ENCODE measurements at regions of chr3 and their contacts with region 1.

Region 1: DNA sequence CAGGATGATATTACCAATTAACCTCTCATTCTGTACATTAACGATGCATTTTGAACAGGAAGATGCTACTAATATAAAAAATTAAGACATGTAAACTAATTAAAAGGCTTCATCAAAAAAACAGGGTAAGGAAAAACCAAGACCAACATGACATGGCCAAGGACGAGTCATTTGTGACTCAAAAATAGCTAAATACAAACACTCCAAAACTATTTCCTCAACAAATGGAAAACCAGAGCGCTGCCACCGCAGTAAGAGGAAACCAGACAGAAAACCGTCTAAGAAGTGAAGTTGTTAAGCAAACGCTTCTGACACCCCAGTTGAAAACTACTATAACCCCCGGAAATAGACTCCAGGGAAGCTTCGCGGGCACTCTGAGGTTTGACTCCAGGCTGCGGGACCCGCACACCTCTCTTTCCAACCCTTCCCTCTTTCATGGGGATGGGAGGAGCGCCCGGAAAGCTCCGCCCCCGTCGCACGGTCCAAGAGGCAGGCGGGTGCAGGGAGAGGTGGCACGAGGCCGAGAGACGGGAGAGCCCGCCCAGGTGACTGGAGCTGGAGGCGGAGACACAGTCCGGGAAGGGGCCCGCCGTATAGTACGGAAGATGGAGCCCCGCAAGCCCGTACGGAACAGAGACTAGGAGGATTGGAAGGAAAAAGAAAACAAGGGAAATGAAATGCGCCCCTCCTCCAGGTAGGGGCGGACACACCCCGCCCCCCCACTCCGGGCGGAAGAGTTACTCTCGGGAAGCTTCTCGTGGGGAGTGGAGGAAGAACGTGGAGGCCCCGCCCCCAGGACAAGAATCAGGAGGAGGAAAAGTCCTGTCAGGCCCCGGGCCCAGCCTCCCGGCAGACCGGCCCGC is 708 bp downstream of the DCAF1 start:
- DNase-seq: peak; percentile 81
- H3K4me3 ChIP-seq: peak overlapping the region; percentile 78
- H3K27ac ChIP-seq: peak overlapping the region; percentile 88
- H3K27me3 ChIP-seq: no peaks in the 10 kb centered on the region
- CTCF ChIP-seq: no peak

Region 2: GRCh38 chr3:51362476-51362875 is 136.6 kb before region 1 on chr3:
- CTCF ChIA-PET with region 1: no interaction called
- POLR2A ChIA-PET with region 1: no interaction called
- DNase-seq: no peak
- H3K4me3 ChIP-seq: no peak overlapping the region
- H3K27ac ChIP-seq: no peak overlapping the region
- H3K27me3 ChIP-seq: peaks cover 6% of the 10 kb centered on the region
- CTCF ChIP-seq: no peak

Region 3: DNA sequence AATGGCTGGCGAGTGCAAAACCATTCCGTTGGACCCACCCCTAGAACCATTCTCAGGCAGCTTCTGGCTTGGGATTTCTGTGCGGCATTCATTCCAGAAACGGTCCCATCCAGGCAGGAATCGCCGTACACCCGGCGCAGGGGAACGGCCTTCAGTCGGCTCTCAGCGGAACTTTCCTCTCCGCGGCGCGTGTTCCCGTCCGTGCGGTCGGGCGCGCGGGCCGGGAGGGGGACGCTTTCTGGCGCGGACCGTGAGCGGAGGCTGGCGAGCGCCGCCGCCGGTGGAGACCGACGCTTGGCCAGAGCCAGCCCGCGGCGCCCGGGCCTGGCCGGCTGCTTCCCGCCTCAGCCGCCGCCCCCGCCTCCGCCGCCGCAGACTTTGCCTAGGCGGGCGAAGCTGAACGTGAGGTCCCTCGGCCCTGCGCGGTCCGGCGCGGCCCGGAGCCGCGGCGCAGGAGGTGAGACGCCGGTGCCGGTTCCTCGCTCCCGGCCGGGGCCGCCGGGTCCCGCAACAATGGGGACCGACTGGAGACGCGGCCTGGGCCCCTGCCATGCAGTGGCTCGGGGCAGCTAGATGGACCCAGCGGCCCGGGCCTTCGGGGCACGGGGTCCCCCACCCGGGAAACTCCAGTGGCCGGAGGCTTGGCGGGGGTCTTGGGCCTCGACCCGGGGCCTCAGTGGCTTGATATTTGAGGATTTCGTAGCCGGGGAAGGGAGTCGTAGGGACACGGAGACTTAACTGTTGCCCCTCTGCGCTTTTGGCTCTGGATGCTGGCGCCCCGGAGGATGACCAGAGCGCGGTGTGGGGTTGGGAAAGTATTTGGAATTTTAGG is 39.6 kb after region 1 on chr3 and contains the start of gene RAD54L2:
- CTCF ChIA-PET with region 1: interaction called, 16 read pairs
- POLR2A ChIA-PET with region 1: interaction called, 19 read pairs
- DNase-seq: peak; percentile 59
- H3K4me3 ChIP-seq: peak within 1 kb of the TSS; percentile 79
- H3K27ac ChIP-seq: peak within 1 kb of the TSS; percentile 89
- H3K27me3 ChIP-seq: no peaks in the 10 kb centered on the region
- CTCF ChIP-seq: no peak; the same call in 1 of the 2 replicates
- polyA plus RNA-seq, gene RAD54L2: 8.1 and 9.6 TPM in 2 replicates

Region 4: DNA sequence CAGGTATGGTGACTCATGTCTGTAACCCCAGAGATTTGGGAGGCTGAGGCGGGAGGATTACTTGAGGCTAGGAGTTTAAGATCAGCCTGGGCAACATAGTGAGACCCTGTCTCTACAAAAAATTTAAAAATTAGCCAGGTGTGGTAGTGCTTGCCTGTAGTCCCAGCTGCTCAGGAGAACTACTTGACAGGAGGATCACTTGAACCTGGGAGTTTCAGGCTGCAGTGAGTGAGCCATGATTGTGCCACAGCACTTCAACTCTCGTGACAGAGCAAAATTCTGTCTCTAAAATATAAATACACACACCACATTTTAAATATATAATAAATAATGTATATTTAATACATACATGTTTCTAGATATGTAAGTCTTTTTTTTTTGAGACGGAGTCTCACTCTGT is 118.5 kb after region 1 on chr3:
- CTCF ChIA-PET with region 1: interaction called, 9 read pairs
- POLR2A ChIA-PET with region 1: interaction called, 15 read pairs
- DNase-seq: no peak
- H3K4me3 ChIP-seq: no peak overlapping the region
- H3K27ac ChIP-seq: no peak overlapping the region
- H3K27me3 ChIP-seq: no peaks in the 10 kb centered on the region
- CTCF ChIP-seq: no peak

Region 5: GRCh38 chr3:51682079-51682478 is 183.0 kb after region 1 on chr3:
- CTCF ChIA-PET with region 1: interaction called, 189 read pairs
- POLR2A ChIA-PET with region 1: interaction called, 9 read pairs
- DNase-seq: peak; percentile 67
- H3K4me3 ChIP-seq: no peak overlapping the region
- H3K27ac ChIP-seq: no peak overlapping the region
- H3K27me3 ChIP-seq: no peaks in the 10 kb centered on the region
- CTCF ChIP-seq: peak; percentile 90

Measured in AG04450 (cell line).